HepG2 (cell line): ENCODE measurements at regions of chr20 and their contacts with region 1.

Region 1: DNA sequence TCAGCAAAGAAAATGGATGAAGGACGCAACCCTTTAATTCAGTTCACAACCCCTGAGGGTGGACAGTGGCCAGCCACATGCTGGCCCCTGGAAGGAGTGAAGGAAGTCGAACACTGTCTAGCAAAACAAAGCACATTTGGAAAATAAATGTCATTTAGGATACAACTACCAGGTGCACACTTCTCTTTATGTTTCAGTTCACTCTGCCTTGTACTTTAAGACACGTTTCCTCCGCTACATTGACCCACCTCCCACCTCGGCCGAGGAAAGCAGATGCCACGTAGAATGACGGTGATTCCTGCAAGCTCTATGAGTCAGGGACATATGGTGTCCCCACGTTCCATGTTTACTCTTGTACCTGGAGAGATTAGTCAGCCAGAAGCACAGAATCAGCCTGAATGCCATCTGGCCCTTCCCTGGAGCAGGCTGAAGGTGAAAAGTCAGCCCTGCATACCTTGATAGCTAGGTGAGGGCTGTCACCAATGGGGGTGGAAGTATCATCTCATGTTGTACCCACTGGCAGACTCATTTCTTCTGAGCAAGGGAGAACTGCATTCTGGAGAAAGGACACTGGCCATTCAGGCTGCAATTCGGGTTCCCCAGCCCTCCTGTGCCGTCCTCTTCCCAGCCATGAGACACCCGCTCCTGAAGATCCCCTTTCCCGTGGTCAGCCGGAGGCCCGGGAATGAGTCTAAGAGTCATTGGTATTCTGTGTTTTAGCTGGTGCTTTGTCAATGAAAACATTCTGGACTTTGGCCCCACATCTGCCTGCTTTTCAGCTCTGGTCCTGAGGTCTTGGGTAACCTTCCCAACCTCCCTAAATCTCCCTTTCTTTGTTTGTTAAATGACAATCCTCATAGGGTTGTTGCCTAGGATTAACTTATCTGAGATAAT is 60.6 kb downstream of the FOXA2 start:
- DNase-seq: peak; percentile 99
- ATAC-seq: peak; percentile 81
- H3K4me3 ChIP-seq: peak overlapping the region; percentile 39 to 69 (median 50); a peak in 5 of 6 replicates
- H3K27ac ChIP-seq: peak overlapping the region; percentile 89
- H3K4me1 ChIP-seq: peaks cover 67% of the 10 kb centered on the region
- H3K27me3 ChIP-seq: no peaks in the 10 kb centered on the region
- CTCF ChIP-seq: no peak
- EP300 ChIP-seq: peak; percentile 46 to 90
- POLR2A ChIP-seq: peak; percentile 74 to 85
- RAD21 ChIP-seq: peak; percentile 72

Region 2: DNA sequence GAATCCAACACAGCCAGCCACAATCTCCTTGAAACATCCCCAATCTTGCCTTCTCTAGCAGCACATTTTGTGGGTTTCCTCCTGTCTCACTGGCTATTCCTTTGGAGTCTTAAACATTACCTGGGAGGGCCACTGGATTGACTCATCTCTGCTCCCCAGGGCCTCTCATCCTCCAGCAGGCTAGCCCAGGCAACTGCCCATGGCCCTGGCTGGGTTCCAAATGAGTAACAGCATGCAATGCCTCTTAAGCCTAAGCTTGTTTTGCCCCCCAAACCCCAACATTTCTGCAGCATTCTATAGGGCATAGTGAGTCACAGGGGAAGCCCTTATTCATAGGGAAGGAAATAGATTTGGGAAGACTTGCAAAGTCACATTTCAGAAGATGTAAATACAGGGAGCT is 144.3 kb before region 1 on chr20:
- CTCF ChIA-PET with region 1: no interaction called
- POLR2A ChIA-PET with region 1: no interaction called
- in situ Hi-C with region 1: no loop called
- intact Hi-C with region 1: no loop called
- DNase-seq: no peak
- ATAC-seq: no peak
- H3K4me3 ChIP-seq: no peak overlapping the region
- H3K27ac ChIP-seq: no peak overlapping the region
- H3K4me1 ChIP-seq: no peaks in the 10 kb centered on the region
- H3K27me3 ChIP-seq: peaks cover 0 to 25% of the 10 kb centered on the region in 2 experiments; a peak in 3 of 5 replicates
- CTCF ChIP-seq: no peak
- EP300 ChIP-seq: no peak
- POLR2A ChIP-seq: no peak
- RAD21 ChIP-seq: no peak

Region 3: GRCh38 chr20:22430154-22430745 is 93.5 kb before region 1 on chr20:
- CTCF ChIA-PET with region 1: no interaction called
- POLR2A ChIA-PET with region 1: interaction called, 23 read pairs
- in situ Hi-C with region 1: no loop called
- intact Hi-C with region 1: no loop called
- DNase-seq: peak; percentile 92
- ATAC-seq: peak; percentile 67
- H3K4me3 ChIP-seq: peak overlapping the region; percentile 45 to 67 (median 67)
- H3K27ac ChIP-seq: peak overlapping the region; percentile 96
- H3K4me1 ChIP-seq: peaks cover 75% of the 10 kb centered on the region
- H3K27me3 ChIP-seq: no peaks in the 10 kb centered on the region; a peak in 1 of 5 replicates
- CTCF ChIP-seq: no peak
- EP300 ChIP-seq: peak; percentile 44 to 54; a peak in 3 of 4 replicates
- POLR2A ChIP-seq: peak; percentile 18 to 69
- RAD21 ChIP-seq: no peak

Region 4: GRCh38 chr20:22471156-22471844 is 52.4 kb before region 1 on chr20:
- CTCF ChIA-PET with region 1: interaction called, 3 read pairs
- POLR2A ChIA-PET with region 1: interaction called, 22 read pairs
- in situ Hi-C with region 1: no loop called
- intact Hi-C with region 1: no loop called
- DNase-seq: peak; percentile 72
- ATAC-seq: peak; percentile 44
- H3K4me3 ChIP-seq: peak overlapping the region in 1 of 3 experiments; percentile 4; a peak in 1 of 6 replicates
- H3K27ac ChIP-seq: peak overlapping the region; percentile 2
- H3K4me1 ChIP-seq: peaks cover 56% of the 10 kb centered on the region
- H3K27me3 ChIP-seq: peaks cover 7 to 17% of the 10 kb centered on the region in 2 experiments; a peak in 3 of 5 replicates
- CTCF ChIP-seq: no peak
- EP300 ChIP-seq: peak in 1 of 2 experiments; percentile 38; a peak in 1 of 4 replicates
- POLR2A ChIP-seq: no peak
- RAD21 ChIP-seq: no peak

Region 5: GRCh38 chr20:22499515-22500166 is 24.1 kb before region 1 on chr20:
- CTCF ChIA-PET with region 1: no interaction called
- POLR2A ChIA-PET with region 1: interaction called, 29 read pairs
- in situ Hi-C with region 1: no loop called
- intact Hi-C with region 1: no loop called
- DNase-seq: no peak
- ATAC-seq: no peak
- H3K4me3 ChIP-seq: no peak overlapping the region
- H3K27ac ChIP-seq: no peak overlapping the region
- H3K4me1 ChIP-seq: peaks cover 64% of the 10 kb centered on the region
- H3K27me3 ChIP-seq: no peaks in the 10 kb centered on the region
- CTCF ChIP-seq: no peak
- EP300 ChIP-seq: no peak
- POLR2A ChIP-seq: no peak
- RAD21 ChIP-seq: no peak

Region 6: DNA sequence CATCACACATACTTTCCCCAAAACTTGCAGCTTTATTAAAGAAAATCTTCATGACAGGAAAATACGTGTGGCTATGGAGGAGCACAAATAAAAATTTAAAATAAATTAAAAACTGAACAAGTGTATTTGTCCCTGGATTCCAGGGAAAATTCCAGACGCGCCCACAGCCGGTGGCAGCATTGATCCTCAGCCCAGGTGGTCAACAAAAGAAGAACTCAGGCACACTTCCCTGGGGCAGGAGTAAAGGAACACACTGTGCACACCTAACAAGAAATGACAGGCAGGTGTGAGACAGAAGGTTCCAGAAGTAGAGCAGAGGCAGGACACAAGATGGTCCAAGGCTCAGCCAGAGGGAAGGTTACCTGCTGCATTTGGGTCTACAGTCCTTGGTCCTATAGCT is 24.3 kb after region 1 on chr20:
- CTCF ChIA-PET with region 1: no interaction called
- POLR2A ChIA-PET with region 1: no interaction called
- in situ Hi-C with region 1: no loop called
- intact Hi-C with region 1: loop called (anchors 2 kb)
- DNase-seq: no peak
- ATAC-seq: peak; percentile 20; the same call in 2 of the 3 replicates
- H3K4me3 ChIP-seq: no peak overlapping the region
- H3K27ac ChIP-seq: no peak overlapping the region
- H3K4me1 ChIP-seq: peaks cover 54% of the 10 kb centered on the region
- H3K27me3 ChIP-seq: no peaks in the 10 kb centered on the region; a peak in 1 of 5 replicates
- CTCF ChIP-seq: no peak
- EP300 ChIP-seq: no peak
- POLR2A ChIP-seq: no peak
- RAD21 ChIP-seq: no peak

Region 7: GRCh38 chr20:22575087-22575721 is 51.5 kb after region 1 on chr20:
- CTCF ChIA-PET with region 1: no interaction called
- POLR2A ChIA-PET with region 1: interaction called, 142 read pairs
- in situ Hi-C with region 1: no loop called
- intact Hi-C with region 1: no loop called
- DNase-seq: peak; percentile 23
- ATAC-seq: no peak
- H3K4me3 ChIP-seq: peak overlapping the region in 2 of 3 experiments; percentile 32 to 95; a peak in 2 of 6 replicates
- H3K27ac ChIP-seq: peak overlapping the region; percentile 86
- H3K4me1 ChIP-seq: peaks cover 85% of the 10 kb centered on the region
- H3K27me3 ChIP-seq: no peaks in the 10 kb centered on the region; a peak in 1 of 5 replicates
- CTCF ChIP-seq: no peak
- EP300 ChIP-seq: no peak
- POLR2A ChIP-seq: no peak
- RAD21 ChIP-seq: no peak

Region 8: GRCh38 chr20:22675341-22675740 is 151.6 kb after region 1 on chr20:
- CTCF ChIA-PET with region 1: no interaction called
- POLR2A ChIA-PET with region 1: no interaction called
- in situ Hi-C with region 1: no loop called
- intact Hi-C with region 1: no loop called
- DNase-seq: no peak
- ATAC-seq: no peak
- H3K4me3 ChIP-seq: no peak overlapping the region
- H3K27ac ChIP-seq: no peak overlapping the region
- H3K4me1 ChIP-seq: peaks cover 13% of the 10 kb centered on the region
- H3K27me3 ChIP-seq: peaks cover 2 to 11% of the 10 kb centered on the region in 2 experiments; a peak in 2 of 5 replicates
- CTCF ChIP-seq: no peak
- EP300 ChIP-seq: no peak
- POLR2A ChIP-seq: no peak
- RAD21 ChIP-seq: no peak